Activated CD4-positive, alpha-beta T cell treated with anti-CD3 and anti-CD28 coated beads for 36 hours (primary cell): ENCODE measurements at regions of chr1 and their contacts with region 1.

Region 1: DNA sequence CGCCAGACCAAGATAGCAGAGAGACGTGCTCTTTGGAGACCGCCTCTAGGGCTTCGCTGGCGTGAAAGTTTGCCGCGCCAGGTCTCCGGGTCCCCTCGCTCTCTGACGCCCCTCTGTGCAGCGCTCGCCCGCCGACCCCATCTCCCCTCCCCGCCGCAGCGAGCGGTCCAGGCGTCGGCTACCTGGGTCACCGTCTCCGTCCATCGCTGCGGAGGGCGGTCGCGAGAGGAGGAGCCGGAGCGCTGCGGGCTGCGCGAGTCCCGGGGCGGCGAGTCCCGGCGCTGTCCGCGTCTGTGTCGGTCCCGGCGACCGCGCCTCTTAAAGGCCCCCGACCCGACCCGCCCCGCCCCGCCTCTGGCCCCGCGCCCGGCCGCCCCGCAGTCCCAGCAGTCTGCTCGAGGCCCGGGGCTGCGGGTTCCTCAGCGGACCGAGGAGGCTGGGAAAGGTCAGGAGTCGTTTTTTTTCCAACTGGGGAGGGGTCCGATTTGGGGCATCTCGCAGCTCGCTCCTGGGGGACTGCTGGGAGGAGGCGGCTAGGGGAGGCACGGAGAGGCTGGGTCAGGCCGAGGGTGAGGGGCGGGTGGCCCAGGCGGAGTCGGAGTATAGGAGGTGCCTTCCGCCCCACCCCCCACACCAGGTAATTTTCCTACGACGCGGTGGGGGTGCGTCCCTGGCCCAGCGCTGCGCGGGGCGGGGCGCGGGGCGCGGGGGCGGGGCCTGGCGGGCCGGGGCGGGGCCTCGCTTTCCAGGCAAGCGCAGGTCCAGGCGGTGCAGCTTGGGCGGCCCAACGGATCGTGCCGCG is at the starts of genes FBXO2 and FBXO44:
- DNase-seq: peak; percentile 85
- ATAC-seq: peak; percentile 82
- H3K4me3 Mint-ChIP-seq: peak within 1 kb of the TSS; percentile 73
- H3K27ac Mint-ChIP-seq: no peak within 1 kb of the TSS
- H3K4me1 Mint-ChIP-seq: peaks cover 25% of the 10 kb centered on the region
- H3K27me3 Mint-ChIP-seq: no peaks in the 10 kb centered on the region
- total RNA-seq, gene FBXO2: 1.6 to 2.1 TPM
- total RNA-seq, gene FBXO44: 20.2 to 21.8 TPM

Region 2: GRCh38 chr1:10731041-10731440 is 923.3 kb before region 1 on chr1:
- CTCF ChIA-PET with region 1: no interaction called
- POLR2A ChIA-PET with region 1: interaction called, 12 read pairs
- intact Hi-C with region 1: no loop called
- DNase-seq: peak; percentile 29
- ATAC-seq: peak; percentile 63
- H3K4me3 Mint-ChIP-seq: no peak overlapping the region
- H3K27ac Mint-ChIP-seq: no peak overlapping the region
- H3K4me1 Mint-ChIP-seq: peaks cover 20% of the 10 kb centered on the region
- H3K27me3 Mint-ChIP-seq: no peaks in the 10 kb centered on the region

Region 3: DNA sequence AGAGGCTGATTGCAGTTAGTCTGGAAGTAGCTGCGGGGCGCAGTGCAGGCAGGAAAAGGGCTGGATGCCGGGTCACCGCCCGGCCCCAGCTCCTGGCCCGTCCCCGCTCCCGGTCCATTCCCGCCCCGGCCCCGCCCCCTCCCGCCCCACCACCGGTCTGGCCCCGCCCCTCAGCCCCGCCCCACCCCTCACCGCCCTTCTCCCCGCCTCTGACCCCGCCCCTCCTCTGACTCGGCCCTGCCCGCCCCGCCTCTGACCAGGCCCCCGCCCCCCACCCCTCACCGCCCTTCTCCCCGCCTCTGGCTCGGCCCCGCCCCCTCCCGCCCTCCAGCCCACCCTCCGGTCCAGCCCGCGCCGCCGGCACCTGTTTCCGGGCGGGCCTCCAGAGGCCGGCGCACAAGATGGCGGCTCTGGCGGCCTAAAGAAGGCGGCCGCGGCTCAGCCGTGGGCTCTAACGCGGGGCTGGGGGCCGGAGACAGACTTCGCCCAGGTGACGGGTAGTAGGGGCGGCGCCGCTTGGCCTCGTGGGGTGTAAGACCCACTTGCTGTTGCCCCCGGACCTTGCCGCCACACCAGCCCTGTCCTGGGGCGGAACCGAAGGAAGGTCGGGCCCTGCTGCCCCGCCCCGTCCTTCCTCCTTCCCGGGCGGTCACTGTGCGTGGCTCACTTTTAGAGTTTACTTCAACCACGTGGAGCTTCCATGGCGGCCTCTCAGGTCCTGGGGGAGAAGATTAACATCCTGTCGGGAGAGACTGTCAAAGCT is 381.3 kb before region 1 on chr1 and contains the start of gene UBIAD1:
- CTCF ChIA-PET with region 1: interaction called, 3 read pairs
- POLR2A ChIA-PET with region 1: no interaction called
- intact Hi-C with region 1: loop called in 1 of 2 experiments (anchors 1 kb)
- DNase-seq: peak; percentile 95
- ATAC-seq: peak; percentile 84
- H3K4me3 Mint-ChIP-seq: peak within 1 kb of the TSS; percentile 95
- H3K27ac Mint-ChIP-seq: peak within 1 kb of the TSS; percentile 91
- H3K4me1 Mint-ChIP-seq: peaks cover 29% of the 10 kb centered on the region
- H3K27me3 Mint-ChIP-seq: no peaks in the 10 kb centered on the region
- total RNA-seq, gene UBIAD1: 29.2 to 32.0 TPM

Region 4: GRCh38 chr1:11429226-11429625 is 225.1 kb before region 1 on chr1:
- CTCF ChIA-PET with region 1: no interaction called
- POLR2A ChIA-PET with region 1: no interaction called
- intact Hi-C with region 1: no loop called
- DNase-seq: no peak
- ATAC-seq: no peak
- H3K4me3 Mint-ChIP-seq: no peak overlapping the region
- H3K27ac Mint-ChIP-seq: no peak overlapping the region
- H3K4me1 Mint-ChIP-seq: no peaks in the 10 kb centered on the region
- H3K27me3 Mint-ChIP-seq: no peaks in the 10 kb centered on the region

Region 5: GRCh38 chr1:11617310-11617709 is 37.0 kb before region 1 on chr1:
- CTCF ChIA-PET with region 1: no interaction called
- POLR2A ChIA-PET with region 1: no interaction called
- intact Hi-C with region 1: no loop called
- DNase-seq: no peak
- ATAC-seq: no peak
- H3K4me3 Mint-ChIP-seq: no peak overlapping the region
- H3K27ac Mint-ChIP-seq: no peak overlapping the region
- H3K4me1 Mint-ChIP-seq: no peaks in the 10 kb centered on the region
- H3K27me3 Mint-ChIP-seq: peaks cover 3% of the 10 kb centered on the region

Region 6: GRCh38 chr1:11925938-11926292 is 271.6 kb after region 1 on chr1:
- CTCF ChIA-PET with region 1: no interaction called
- POLR2A ChIA-PET with region 1: no interaction called
- intact Hi-C with region 1: loop called in 1 of 2 experiments (anchors 1 kb)
- DNase-seq: no peak
- ATAC-seq: peak; percentile 21
- H3K4me3 Mint-ChIP-seq: peak overlapping the region; percentile 77
- H3K27ac Mint-ChIP-seq: no peak overlapping the region
- H3K4me1 Mint-ChIP-seq: peaks cover 30% of the 10 kb centered on the region
- H3K27me3 Mint-ChIP-seq: no peaks in the 10 kb centered on the region

Region 7: DNA sequence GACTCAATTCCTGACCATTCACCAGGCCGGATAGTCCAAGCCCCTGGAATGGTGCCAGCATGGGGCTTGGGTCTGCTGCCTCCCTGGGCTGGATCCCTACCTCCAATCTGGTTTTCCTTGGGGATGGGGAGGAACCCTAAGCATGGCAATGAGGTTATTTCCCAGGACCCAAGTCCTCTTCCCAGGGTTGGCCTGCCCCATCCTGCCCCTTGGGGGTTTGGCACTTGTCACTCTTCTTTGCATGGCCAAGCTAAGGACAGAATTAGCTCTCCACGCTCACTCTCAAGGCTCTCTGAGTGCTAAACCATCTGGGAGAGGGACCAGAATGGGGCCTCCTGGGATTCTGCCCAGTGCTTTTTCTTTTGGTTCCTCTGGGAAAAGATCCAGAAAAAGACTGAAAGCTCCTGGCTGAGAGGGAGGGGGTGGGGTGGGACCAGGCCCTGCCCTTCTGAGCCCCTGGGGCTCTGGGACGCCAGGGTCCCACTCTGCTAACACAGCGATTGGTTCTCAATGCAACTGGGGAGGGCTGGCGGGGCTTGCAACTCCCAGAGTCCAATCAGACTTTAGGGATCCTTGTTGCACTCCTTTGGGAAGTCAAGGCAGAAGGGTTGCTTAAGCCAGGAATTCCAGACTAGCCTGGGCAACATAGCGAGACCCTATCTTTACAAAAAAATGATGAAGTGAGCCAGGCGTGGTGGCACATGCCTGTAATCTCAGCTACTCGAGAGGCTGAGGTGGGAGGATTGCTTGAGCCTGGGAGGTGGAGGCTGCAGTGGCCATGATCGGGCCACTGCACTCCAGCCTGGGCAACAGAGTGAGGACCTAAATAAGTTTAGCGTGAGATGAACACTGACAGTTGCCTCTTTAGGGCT is 911.0 kb after region 1 on chr1:
- CTCF ChIA-PET with region 1: no interaction called
- POLR2A ChIA-PET with region 1: no interaction called
- intact Hi-C with region 1: no loop called
- DNase-seq: no peak
- ATAC-seq: no peak
- H3K4me3 Mint-ChIP-seq: no peak overlapping the region
- H3K27ac Mint-ChIP-seq: no peak overlapping the region
- H3K4me1 Mint-ChIP-seq: no peaks in the 10 kb centered on the region
- H3K27me3 Mint-ChIP-seq: no peaks in the 10 kb centered on the region